ENCODE measurements at regions of chrX and their contacts with region 1.

Region 1: GRCh38 chrX:140912601-140913000 is 89.8 kb upstream of the SPANXB1 start:
- DNase-seq: peak; percentile 44
- ATAC-seq: no peak
- H3K4me3 ChIP-seq: no peak overlapping the region
- H3K27ac ChIP-seq: no peak overlapping the region; the same call in 1 of the 2 replicates
- H3K4me1 ChIP-seq: peaks cover 8% of the 10 kb centered on the region; the same call in 1 of the 2 replicates
- H3K27me3 ChIP-seq: no peaks in the 10 kb centered on the region
- CTCF ChIP-seq: no peak

Region 2: GRCh38 chrX:140799216-140799615 is 113.4 kb before region 1 on chrX:
- CTCF ChIA-PET with region 1: no interaction called
- POLR2A ChIA-PET with region 1: no interaction called
- intact Hi-C with region 1: no loop called
- DNase-seq: peak; percentile 20
- ATAC-seq: 0 out of 2 replicates have a peak, but pooled peaks have one; percentile 20
- H3K4me3 ChIP-seq: no peak overlapping the region
- H3K27ac ChIP-seq: no peak overlapping the region
- H3K4me1 ChIP-seq: no peaks in the 10 kb centered on the region
- H3K27me3 ChIP-seq: no peaks in the 10 kb centered on the region
- CTCF ChIP-seq: no peak

Region 3: DNA sequence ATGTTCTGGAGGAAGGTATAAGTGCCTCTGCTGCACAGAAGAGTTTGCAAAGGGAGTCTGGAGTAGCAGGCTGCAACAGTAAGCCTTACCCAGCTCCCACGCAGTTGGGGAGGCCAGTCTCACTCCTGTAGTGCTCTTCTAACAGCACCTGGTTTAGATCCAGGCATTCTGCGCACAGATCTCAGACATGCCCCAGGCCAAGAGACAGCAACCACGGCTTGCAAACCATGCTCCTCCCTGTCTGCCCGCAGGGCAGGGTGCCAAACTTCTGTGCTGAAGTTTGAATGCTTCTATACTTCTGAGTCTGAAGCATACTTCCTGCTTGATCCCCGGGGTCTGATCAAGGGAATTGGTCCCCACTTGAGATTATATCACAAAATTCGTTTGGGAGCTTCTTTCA is 96.7 kb before region 1 on chrX:
- CTCF ChIA-PET with region 1: no interaction called
- POLR2A ChIA-PET with region 1: no interaction called
- intact Hi-C with region 1: loop called (anchors 1 kb)
- DNase-seq: peak; percentile 63
- ATAC-seq: peak; percentile 64
- H3K4me3 ChIP-seq: no peak overlapping the region
- H3K27ac ChIP-seq: no peak overlapping the region
- H3K4me1 ChIP-seq: peaks cover 3% of the 10 kb centered on the region; the same call in 1 of the 2 replicates
- H3K27me3 ChIP-seq: no peaks in the 10 kb centered on the region
- CTCF ChIP-seq: no peak

Region 4: GRCh38 chrX:141142946-141143345 is 230.3 kb after region 1 on chrX:
- CTCF ChIA-PET with region 1: no interaction called
- POLR2A ChIA-PET with region 1: no interaction called
- intact Hi-C with region 1: no loop called
- DNase-seq: no peak
- ATAC-seq: no peak
- H3K4me3 ChIP-seq: no peak overlapping the region
- H3K27ac ChIP-seq: no peak overlapping the region
- H3K4me1 ChIP-seq: no peaks in the 10 kb centered on the region
- H3K27me3 ChIP-seq: no peaks in the 10 kb centered on the region
- CTCF ChIP-seq: no peak

Measured in PC-3 (cell line).